Activated CD4-positive, alpha-beta memory T cell treated with anti-CD3 and anti-CD28 coated beads for 36 hours (primary cell): ENCODE measurements at regions of chr9 and their contacts with region 1.

Region 1: GRCh38 chr9:93143830-93144530 is 9.9 kb upstream of the NINJ1 start:
- DNase-seq: peak; percentile 63
- H3K4me3 Mint-ChIP-seq: no peak overlapping the region
- H3K27ac Mint-ChIP-seq: peak overlapping the region; percentile 82
- H3K4me1 Mint-ChIP-seq: peaks cover 59% of the 10 kb centered on the region
- H3K27me3 Mint-ChIP-seq: no peaks in the 10 kb centered on the region

Region 2: GRCh38 chr9:93431583-93431991 is 287.6 kb after region 1 on chr9:
- CTCF ChIA-PET with region 1: no interaction called
- POLR2A ChIA-PET with region 1: no interaction called
- intact Hi-C with region 1: no loop called
- DNase-seq: no peak
- H3K4me3 Mint-ChIP-seq: no peak overlapping the region
- H3K27ac Mint-ChIP-seq: no peak overlapping the region
- H3K4me1 Mint-ChIP-seq: no peaks in the 10 kb centered on the region
- H3K27me3 Mint-ChIP-seq: peaks cover 6% of the 10 kb centered on the region

Region 3: GRCh38 chr9:93464395-93464794 is 320.4 kb after region 1 on chr9:
- CTCF ChIA-PET with region 1: no interaction called
- POLR2A ChIA-PET with region 1: no interaction called
- intact Hi-C with region 1: loop called (anchors 5 kb)
- DNase-seq: no peak
- H3K4me3 Mint-ChIP-seq: peak overlapping the region; percentile 45
- H3K27ac Mint-ChIP-seq: peak overlapping the region; percentile 94
- H3K4me1 Mint-ChIP-seq: peaks cover 84% of the 10 kb centered on the region
- H3K27me3 Mint-ChIP-seq: no peaks in the 10 kb centered on the region